ENCODE measurements at regions of chr12 and their contacts with region 1.

Region 1: DNA sequence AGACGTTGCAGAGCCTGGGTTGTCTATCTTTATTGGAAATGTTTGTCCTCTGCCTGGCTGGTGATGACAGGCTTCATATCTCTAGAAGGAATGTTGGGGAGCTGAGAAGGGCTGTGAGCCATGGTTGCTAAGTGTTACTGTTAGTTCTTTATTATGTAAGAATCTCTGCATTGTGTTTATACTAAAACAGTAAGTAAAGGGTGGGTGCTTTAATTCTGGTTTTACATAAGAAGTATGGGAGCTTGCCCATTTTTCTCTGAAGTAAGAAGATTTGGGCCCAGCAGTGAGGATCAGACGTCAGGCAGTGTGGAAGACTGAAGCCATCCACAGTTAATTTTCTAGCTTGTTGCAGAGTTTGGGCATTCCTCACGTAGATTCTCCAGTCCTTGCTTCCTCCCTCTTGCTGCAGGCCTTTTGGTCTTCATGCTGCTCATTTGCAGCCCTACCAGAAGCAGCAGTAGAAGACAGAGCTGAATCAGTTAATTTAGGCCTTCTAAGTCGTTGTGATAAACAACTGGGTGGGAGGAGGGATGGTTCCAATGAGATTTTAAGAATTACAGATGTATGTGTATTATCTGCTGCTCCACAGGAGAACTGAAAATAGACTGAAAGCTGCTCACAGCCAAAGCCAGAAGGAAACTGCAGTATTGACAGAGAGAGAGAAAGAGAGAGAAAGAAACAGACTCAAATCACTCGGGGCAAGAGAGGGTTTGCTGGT is 21.4 kb downstream of the WNT5B start:
- DNase-seq: no peak
- H3K4me3 ChIP-seq: no peak overlapping the region
- H3K27ac ChIP-seq: peak overlapping the region; percentile 43 to 59
- H3K4me1 ChIP-seq: peaks cover 0 to 23% (median 10%) of the 10 kb centered on the region in 4 donors
- H3K27me3 ChIP-seq: no peaks in the 10 kb centered on the region
- CTCF ChIP-seq: no peak

Region 2: GRCh38 chr12:1147821-1148220 is 502.6 kb before region 1 on chr12:
- intact Hi-C with region 1: no loop called
- DNase-seq: no peak
- H3K4me3 ChIP-seq: no peak overlapping the region
- H3K27ac ChIP-seq: no peak overlapping the region
- H3K4me1 ChIP-seq: no peaks in the 10 kb centered on the region
- H3K27me3 ChIP-seq: no peaks in the 10 kb centered on the region
- CTCF ChIP-seq: no peak

Region 3: DNA sequence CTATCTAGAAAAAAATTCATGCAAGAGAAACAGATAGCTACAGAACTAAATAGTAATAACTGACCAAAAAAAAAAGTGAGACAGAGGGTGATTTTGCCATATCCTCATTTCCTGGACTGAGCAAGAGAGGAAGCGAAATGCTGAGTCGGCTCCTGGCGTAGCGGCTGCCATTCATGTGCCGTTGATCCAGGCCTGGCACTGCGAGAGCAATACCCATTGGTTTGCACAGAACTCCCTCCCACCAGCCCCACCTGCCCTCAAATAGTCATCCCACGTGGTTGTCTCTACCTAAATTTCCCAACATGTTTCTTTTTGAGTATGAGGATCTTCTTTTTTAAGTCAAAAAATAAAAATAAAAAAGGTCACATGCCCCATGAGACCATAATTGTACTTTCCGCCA is 30.8 kb before region 1 on chr12:
- intact Hi-C with region 1: no loop called
- DNase-seq: peak; percentile 65 to 75
- H3K4me3 ChIP-seq: no peak overlapping the region
- H3K27ac ChIP-seq: no peak overlapping the region
- H3K4me1 ChIP-seq: no peaks in the 10 kb centered on the region
- H3K27me3 ChIP-seq: no peaks in the 10 kb centered on the region
- CTCF ChIP-seq: no peak

Region 4: DNA sequence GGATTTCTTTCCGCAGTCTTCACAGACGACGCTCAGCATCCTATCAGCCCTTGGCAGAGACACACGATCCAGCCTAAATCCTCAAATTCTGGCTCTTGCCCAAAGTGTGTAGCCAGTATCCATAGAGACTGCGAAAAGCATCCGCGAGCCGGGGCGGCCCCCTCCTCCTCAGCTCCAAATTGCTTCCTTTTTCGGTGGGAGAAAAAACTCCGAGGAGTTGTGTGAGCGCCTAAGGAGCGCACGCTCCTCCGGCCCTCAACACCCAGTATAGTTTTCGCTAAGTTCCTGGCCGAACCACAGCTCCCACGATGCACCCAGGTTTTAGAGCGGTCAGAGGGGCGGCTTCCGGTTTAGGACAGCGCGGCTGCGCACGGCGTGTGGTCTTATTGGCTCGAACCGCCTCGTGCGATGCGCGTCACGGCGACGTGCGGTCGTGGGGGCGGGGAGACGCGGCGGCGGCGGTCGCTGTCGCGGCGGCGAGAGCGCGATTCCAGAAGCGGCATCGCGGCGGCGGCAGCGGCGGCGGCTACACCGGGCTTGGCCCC is 40.2 kb after region 1 on chr12 and contains the start of gene ADIPOR2:
- intact Hi-C with region 1: loop called (anchors 5 kb)
- DNase-seq: peak; percentile 94 to 97
- H3K4me3 ChIP-seq: peak within 1 kb of the TSS; percentile 72 to 98
- H3K27ac ChIP-seq: peak within 1 kb of the TSS; percentile 94 to 95
- H3K4me1 ChIP-seq: peaks cover 0 to 23% (median 18%) of the 10 kb centered on the region in 4 donors
- H3K27me3 ChIP-seq: no peaks in the 10 kb centered on the region
- CTCF ChIP-seq: no peak

Measured in tibial artery (tissue), 4 donors.